Right ventricle myocardium inferior (tissue), 1 donor: ENCODE measurements at regions of chr10 and their contacts with region 1.

Region 1: GRCh38 chr10:88152720-88153119 is 289.3 kb downstream of the PTEN start:
- DNase-seq: no peak
- ATAC-seq: no peak

Region 2: GRCh38 chr10:87945984-87946383 is 206.7 kb before region 1 on chr10:
- intact Hi-C with region 1: no loop called
- DNase-seq: no peak
- ATAC-seq: no peak

Region 3: DNA sequence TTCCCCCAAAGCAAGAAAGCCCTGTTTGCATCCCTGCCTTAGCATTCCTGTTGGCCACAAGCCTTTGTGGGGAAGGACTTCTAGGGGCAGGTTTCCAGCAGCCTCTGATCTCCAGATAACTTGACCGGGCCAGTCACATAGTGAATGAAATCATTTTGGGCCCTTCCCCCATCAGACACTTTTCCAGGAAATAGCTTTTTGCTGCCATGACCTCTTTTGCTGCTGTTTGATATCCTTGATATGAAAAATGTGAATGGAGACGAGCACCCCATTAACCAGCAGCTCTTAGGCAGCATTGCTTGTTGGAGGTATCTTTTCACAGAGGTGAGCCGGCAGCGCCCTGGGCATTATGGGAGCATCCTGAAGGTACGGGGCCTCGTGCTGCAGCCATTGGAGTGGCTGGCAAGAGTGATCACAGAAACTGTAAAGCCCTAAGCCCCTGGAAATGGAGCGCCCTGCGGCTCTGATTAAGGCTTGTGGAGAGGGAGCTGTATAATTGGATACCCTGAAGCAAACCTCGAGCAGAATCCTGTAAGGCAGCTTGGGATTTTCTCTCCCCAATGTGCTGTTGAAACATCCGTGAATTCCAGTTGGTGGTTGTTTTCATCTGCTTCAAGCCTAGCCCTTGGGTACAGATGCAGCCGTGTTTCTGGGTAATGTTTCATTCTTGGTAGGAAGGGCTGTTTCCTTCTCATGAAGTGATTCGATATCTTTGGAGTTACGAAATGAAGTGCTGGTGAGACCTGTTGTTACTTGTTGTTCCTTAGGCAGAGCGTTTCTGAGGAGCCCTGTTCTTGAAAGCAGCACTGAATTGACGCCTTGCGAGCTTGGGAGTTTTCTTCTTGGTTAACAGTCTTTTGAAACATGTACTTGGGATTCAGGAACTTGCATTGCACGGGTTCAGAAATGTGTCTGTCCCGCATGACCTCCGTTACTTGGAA is 110.3 kb before region 1 on chr10:
- intact Hi-C with region 1: loop called (anchors 5 kb)
- DNase-seq: no peak
- ATAC-seq: peak; percentile 74

Region 4: DNA sequence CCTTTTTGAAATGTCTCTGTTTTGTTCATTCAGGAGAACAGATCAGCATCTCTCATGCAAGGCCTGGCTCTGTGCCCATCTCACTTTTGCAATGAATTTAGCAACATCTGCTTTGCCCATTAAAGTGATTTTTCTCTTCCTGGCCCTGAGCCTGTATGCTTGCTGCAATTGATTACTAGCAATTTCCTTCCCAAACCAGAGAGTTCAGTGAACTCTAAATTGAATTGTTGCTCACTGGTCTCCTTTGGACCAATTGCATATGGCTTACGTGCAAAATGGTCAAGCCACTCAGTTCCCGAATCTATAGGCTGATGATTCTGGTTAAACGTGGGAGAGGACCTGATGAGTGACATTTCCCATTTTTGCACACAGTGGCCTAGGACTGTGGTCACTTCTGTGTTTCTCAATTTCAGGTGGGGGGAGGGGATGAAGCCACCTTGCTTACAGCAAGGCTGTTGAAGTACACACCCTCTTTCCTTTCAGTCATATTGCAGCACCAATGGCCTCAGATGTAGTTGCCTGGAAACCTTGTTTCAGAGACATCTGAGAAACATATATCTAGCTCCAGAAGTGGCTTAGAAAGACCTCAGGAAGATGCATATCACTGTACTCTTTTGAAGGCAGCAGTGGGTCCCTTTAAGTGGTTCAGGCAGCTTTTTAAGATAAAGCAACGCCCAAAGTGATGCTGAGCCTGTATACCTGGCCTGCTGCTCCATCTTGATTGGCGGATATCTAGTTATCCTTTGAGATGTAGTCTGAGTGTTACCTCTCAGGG is 87.9 kb before region 1 on chr10:
- intact Hi-C with region 1: loop called (anchors 5 kb)
- DNase-seq: peak; percentile 79
- ATAC-seq: peak; percentile 28

Region 5: DNA sequence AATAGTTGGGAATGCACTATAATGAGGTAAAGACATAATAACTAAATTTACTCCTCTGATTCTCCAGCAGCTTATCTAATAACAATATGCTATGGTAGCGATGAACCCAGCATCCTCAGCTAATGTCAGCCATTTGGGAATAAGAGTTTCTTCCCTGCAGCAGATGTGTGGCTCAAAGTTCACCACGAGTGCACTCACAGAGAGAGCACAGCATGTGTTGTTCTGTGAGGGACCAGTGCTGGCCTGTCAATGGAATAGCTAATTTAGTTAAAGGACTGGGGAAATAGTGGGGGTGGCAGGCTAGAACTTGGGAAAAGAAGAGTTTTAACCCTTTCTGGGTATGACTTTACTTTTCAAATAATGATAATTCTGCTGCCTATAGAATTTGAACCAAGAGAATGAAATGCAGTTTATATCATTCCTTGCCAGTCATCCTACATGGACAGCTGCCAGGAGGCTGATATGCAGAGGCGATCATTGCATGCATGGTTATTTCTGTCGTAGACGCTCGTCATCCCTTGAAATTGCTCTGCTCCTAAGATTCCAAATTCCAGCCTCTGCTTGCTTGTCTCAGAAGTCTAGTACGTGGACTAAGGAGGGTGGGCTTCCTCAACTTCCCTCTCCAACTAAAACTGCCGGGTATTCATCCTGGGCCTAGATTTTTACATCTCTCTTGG is 74.8 kb after region 1 on chr10:
- intact Hi-C with region 1: loop called (anchors 5 kb)
- DNase-seq: peak; percentile 71
- ATAC-seq: peak; percentile 88

Region 6: DNA sequence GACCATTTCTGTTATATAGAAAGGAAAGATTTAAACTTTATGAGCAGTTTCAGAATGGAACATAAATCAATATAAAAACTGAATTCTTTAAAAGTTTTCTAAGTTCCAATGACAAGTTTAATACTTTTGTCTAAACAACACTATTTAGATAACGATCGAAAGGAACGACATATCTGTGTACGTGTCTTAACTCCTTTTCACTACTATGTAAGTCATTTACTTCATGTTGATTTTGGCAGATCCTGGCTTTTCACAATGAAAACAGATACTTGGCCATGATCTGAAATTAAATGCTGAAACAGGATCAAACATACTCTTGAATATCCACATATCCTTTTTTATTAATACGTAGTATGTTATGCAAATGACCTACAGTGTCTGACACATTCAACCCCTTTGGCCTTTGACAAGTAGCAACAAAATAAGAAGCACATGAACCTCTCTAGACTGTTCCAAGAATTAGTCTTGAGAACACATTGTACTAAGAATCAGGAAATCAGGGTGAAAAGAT is 388.5 kb after region 1 on chr10:
- intact Hi-C with region 1: loop called (anchors 10 kb)
- DNase-seq: no peak
- ATAC-seq: peak; percentile 85